GM12878 (cell line): ENCODE measurements at regions of chr7 and their contacts with region 1.

Region 1: DNA sequence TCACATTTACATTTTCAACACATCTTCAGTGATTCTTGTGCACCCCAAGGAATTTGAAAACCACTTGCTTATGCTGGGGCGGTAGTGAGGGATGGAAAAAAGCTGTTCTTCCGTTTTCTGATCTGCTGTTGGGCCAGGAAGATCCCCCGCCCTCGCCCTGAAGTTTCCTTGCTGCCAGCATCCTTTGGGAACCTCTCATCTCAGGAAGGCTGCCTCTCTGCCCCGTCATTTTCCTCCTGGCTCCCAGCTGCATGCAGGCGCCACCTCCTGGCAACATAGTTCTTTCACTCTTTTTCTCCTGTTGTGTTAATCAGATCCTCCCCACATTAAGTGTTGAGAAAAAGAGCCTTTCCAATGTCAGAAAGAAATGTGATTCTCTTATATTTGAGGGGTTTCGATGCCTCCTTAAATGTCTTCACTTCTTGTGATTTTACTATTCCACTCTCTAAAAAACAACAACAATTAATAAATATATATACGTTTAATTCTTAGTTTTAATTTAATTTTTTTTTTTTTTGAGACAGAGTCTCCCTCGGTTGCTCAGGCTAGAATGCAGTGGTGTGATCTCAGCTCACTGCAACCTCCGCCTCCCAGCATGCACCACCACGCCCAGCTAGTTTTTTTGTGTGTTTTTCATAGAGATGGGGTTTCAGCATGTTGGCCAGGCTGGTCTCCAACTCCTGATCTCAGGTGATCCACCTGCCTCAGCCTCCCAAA is 122.9 kb downstream of the RALA start:
- DNase-seq: no peak
- ATAC-seq: peak; percentile 78
- H3K4me3 ChIP-seq: no peak overlapping the region
- H3K27ac ChIP-seq: no peak overlapping the region
- H3K4me1 ChIP-seq: peaks cover 6% of the 10 kb centered on the region
- H3K27me3 ChIP-seq: no peaks in the 10 kb centered on the region
- CTCF ChIP-seq: peak; percentile 67 to 83 (median 81)
- EP300 ChIP-seq: no peak
- POLR2A ChIP-seq: no peak
- RAD21 ChIP-seq: peak; percentile 91

Region 2: DNA sequence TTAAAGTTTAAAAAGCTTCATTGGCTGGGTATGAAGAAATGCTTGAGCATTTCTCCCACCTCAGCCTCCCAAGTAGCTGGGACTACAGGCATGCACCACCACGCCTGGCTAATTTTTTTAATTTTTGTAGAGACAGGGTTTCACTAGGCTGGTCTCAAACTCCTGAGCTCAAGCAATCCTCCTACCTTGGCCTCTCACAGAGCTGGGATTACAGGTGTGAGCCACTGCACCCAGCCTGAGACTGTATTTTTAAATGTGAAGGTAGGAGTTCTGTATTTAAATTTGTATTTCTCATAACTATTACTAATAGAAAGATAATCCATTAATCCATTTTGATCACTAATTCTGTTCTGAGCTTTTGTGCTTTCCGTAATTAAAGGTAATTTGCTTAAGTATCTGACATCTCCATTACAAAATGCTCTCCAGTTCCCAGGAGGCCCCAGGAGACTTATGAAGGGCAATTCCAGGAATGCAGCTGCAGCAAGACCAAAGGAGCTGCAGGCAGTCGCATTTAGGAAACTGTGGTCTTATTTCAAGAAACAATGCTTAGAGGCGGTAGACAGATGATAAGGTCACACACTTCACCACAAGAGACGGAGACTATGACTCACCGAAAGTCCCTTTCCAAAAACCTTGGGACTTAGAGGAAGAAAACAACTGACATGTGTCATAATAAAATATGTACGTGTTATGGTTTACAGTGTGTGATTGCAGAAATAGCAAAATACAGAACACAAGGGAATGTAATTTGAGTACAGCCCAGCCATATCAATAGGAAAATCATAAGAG is 156.7 kb before region 1 on chr7:
- CTCF ChIA-PET with region 1: interaction called, 16 read pairs
- POLR2A ChIA-PET with region 1: no interaction called
- RAD21 ChIA-PET with region 1: interaction called, 8 read pairs
- SMC1A ChIA-PET with region 1: interaction called, 25 read pairs
- in situ Hi-C with region 1: loop called (anchors 5 kb)
- intact Hi-C with region 1: no loop called
- DNase-seq: peak; percentile 45
- ATAC-seq: peak; percentile 94
- H3K4me3 ChIP-seq: no peak overlapping the region
- H3K27ac ChIP-seq: no peak overlapping the region
- H3K4me1 ChIP-seq: peaks cover 5% of the 10 kb centered on the region; the same call in 1 of the 2 replicates
- H3K27me3 ChIP-seq: no peaks in the 10 kb centered on the region
- CTCF ChIP-seq: no peak
- EP300 ChIP-seq: peak; percentile 90 to 96
- POLR2A ChIP-seq: no peak
- RAD21 ChIP-seq: no peak

Region 3: DNA sequence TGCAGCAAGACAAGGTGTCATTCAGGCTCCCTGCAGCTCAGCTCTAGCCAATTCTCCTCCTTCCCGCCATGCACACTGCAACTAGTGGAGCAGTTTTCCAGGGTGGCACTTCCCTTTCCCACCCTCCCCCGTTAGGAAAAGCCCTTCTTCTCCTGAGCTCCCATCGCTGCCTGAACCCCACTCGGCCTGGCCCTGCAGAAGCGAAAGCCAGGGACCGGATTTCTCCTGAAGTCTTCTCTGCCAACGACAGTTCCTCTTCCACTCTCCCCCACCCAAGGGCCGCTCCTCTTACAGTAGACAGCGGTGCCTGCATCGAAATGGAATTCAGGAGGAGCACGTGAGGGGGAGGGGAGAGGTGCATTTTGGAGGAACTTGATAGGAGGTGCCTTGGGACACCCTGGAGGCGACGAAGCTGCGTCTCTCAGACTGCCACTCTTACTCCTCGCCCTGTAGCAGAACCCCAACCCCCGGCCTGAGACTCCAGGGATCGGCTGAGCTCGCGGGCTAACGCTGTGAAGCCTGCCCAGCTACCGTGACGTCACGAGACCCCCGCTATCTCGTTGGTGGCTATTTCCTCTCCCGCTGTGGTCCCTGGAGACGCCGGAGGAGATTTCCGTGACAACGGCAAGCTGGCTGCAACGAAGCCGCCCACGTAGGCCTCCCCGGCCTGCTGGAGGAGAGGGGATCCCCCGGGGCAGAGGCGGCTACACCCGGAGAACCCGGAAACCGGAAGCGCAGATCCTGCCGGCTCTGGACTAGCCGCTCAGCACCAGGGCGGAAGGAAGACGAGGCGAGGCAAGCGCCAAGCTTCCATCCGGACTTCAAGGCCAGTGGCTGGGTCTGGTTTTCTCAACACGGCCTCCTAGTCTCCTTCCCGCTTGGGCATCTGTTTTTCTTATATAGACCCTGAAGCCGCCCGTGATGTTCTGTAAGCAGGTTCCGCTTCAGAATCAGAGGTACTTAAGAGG is 13.1 kb before region 1 on chr7:
- CTCF ChIA-PET with region 1: interaction called, 63 read pairs
- POLR2A ChIA-PET with region 1: interaction called, 6 read pairs
- RAD21 ChIA-PET with region 1: interaction called, 8 read pairs
- SMC1A ChIA-PET with region 1: interaction called, 25 read pairs
- in situ Hi-C with region 1: no loop called
- intact Hi-C with region 1: no loop called
- DNase-seq: peak; percentile 95
- ATAC-seq: peak; percentile 93
- H3K4me3 ChIP-seq: peak overlapping the region; percentile 77
- H3K27ac ChIP-seq: peak overlapping the region; percentile 80
- H3K4me1 ChIP-seq: peaks cover 10% of the 10 kb centered on the region
- H3K27me3 ChIP-seq: no peaks in the 10 kb centered on the region
- CTCF ChIP-seq: no peak
- EP300 ChIP-seq: peak; percentile 56 to 79
- POLR2A ChIP-seq: peak; percentile 91
- RAD21 ChIP-seq: peak; percentile 4; the same call in 1 of the 2 replicates

Region 4: GRCh38 chr7:39758234-39758970 is 12.1 kb after region 1 on chr7:
- CTCF ChIA-PET with region 1: interaction called, 8 read pairs
- POLR2A ChIA-PET with region 1: no interaction called
- RAD21 ChIA-PET with region 1: no interaction called
- SMC1A ChIA-PET with region 1: interaction called, 13 read pairs
- in situ Hi-C with region 1: no loop called
- intact Hi-C with region 1: no loop called
- DNase-seq: no peak
- ATAC-seq: no peak
- H3K4me3 ChIP-seq: no peak overlapping the region
- H3K27ac ChIP-seq: no peak overlapping the region
- H3K4me1 ChIP-seq: no peaks in the 10 kb centered on the region
- H3K27me3 ChIP-seq: no peaks in the 10 kb centered on the region
- CTCF ChIP-seq: no peak
- EP300 ChIP-seq: no peak
- POLR2A ChIP-seq: no peak
- RAD21 ChIP-seq: no peak